ENCODE measurements at regions of chr11 and their contacts with region 1.

Region 1: DNA sequence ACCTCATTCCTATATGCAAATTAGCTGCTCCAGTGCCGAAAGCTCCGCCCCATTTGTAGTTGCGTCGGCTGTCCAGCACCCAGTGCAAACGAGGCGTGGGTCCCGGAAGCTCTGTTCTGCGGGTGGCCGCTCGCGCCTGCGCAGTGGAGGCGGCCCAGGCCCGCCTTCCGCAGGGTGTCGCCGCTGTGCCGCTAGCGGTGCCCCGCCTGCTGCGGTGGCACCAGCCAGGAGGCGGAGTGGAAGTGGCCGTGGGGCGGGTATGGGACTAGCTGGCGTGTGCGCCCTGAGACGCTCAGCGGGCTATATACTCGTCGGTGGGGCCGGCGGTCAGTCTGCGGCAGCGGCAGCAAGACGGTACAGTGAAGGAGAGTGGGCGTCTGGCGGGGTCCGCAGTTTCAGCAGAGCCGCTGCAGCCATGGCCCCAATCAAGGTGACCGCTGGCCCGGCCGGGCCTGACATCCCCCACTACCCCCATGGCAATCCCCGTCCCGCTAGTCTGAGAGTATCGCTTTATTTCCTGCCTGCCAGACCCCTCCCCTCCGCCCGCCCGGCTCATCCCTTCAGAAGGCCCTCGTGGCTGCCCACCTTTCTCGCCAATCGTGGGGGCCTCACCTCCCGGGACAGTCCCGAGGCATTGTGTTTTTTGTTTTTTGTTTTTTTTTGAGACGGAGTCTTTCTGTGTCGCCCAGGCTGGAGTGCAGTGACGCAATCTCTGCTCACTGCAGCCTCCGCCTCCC is at the start of gene PRDX5:
- DNase-seq: peak; percentile 95 to 98 (median 98)
- H3K4me3 ChIP-seq: peak within 1 kb of the TSS; percentile 64 to 91 (median 86)
- H3K27ac ChIP-seq: peak within 1 kb of the TSS; percentile 87 to 95
- H3K4me1 ChIP-seq: peaks cover 0 to 29% (median 27%) of the 10 kb centered on the region in 4 experiments
- H3K27me3 ChIP-seq: no peaks in the 10 kb centered on the region

Region 2: GRCh38 chr11:64331557-64332371 is 13.6 kb after region 1 on chr11:
- CTCF ChIA-PET with region 1: interaction called, 133 read pairs
- POLR2A ChIA-PET with region 1: interaction called, 18 read pairs
- DNase-seq: peak; percentile 94 to 98 (median 97)
- H3K4me3 ChIP-seq: peak overlapping the region in 3 of 7 experiments; percentile 8 to 36 (median 15)
- H3K27ac ChIP-seq: peak overlapping the region in 1 of 2 experiments; percentile 27
- H3K4me1 ChIP-seq: peaks cover 0 to 40% (median 20%) of the 10 kb centered on the region in 4 experiments
- H3K27me3 ChIP-seq: no peaks in the 10 kb centered on the region

Region 3: DNA sequence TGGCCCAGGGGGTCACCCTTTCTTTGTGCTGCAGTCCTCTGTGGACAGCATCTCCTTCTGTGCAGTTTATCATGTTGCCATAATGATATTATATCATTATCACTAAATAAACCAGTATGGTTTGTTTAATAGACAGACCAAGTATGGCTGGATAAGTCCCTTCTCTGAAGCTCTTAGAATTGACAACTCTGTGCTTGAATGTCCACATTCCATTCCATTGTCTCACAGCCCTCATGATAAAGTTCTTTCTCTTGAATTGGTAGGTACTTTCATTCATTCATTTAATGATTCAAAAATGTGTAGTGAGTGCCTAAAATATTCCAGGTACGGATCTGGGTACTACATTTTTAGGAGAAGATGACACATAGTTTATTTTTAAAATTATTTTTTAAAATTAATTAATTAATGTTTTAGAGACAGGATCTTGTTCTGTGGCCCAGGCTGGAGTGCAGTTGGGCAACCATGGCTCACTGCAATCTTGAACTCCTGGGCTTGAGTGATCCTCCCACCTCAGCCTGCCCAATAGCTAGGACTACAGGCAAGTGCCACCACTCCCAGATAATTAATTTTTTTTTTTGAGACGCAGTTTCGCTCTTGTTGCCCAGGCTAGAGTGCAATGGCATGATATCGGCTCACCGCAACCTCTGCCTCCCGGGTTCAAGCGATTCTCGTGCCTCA is 48.8 kb after region 1 on chr11:
- CTCF ChIA-PET with region 1: no interaction called
- POLR2A ChIA-PET with region 1: no interaction called
- DNase-seq: no peak
- H3K4me3 ChIP-seq: no peak overlapping the region
- H3K27ac ChIP-seq: no peak overlapping the region
- H3K4me1 ChIP-seq: peaks cover 0 to 25% (median 0%) of the 10 kb centered on the region in 4 experiments
- H3K27me3 ChIP-seq: no peaks in the 10 kb centered on the region